ENCODE measurements at regions of chr20 and their contacts with region 1.

Region 1: DNA sequence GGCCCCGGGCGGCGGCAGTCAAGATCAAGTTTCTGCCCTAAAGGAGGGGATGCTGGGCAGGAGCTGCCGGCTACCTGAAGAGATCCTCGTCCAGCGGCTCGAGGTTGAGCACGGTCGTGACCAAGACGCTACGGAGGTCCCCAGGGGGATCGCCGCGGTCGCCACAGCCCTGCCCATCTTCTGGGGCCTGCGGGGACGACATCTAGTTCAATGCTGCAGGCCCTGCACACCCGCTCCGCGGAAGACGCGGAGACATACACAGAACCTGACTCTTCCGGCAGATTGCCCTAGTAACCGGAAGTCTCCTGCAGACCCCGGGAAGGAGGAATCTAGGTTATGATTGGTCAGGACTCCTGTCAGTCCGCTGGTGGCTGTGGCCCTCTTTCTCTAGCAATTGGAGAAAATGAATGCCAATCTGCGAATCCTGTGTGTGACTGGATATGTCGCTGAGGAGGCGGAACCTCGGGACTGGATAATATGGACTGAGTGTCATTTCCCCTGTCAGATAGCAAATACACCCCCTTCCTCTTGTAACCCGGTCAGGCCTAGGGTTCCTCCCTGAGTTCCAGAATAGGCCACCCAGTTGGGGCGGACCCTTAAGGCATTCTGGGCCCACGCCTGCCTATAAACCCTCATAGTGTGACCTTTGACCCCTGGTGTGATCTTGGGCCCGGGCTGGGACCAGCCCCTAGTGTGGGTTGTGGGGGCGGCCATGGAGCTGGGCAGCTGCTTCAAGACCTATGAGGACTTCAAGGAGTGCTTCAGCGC is at the starts of genes ACOT8 and ZSWIM3:
- DNase-seq: peak; percentile 79 to 100 (median 91)
- ATAC-seq: peak; percentile 96
- H3K4me3 ChIP-seq: peak within 1 kb of the TSS; percentile 82 to 87
- H3K4me3 Mint-ChIP-seq: peak within 1 kb of the TSS; percentile 96
- H3K27ac ChIP-seq: peak within 1 kb of the TSS; percentile 80 to 93
- H3K27ac Mint-ChIP-seq: peak within 1 kb of the TSS; percentile 99
- H3K4me1 ChIP-seq: peaks cover 29% of the 10 kb centered on the region
- H3K4me1 Mint-ChIP-seq: peaks cover 52% of the 10 kb centered on the region
- H3K27me3 ChIP-seq: no peaks in the 10 kb centered on the region
- H3K27me3 Mint-ChIP-seq: no peaks in the 10 kb centered on the region
- CTCF ChIP-seq: no peak
- total RNA-seq, gene ACOT8: 14.5 to 17.0 TPM
- total RNA-seq, gene ZSWIM3: 0.30 to 0.58 TPM

Region 2: DNA sequence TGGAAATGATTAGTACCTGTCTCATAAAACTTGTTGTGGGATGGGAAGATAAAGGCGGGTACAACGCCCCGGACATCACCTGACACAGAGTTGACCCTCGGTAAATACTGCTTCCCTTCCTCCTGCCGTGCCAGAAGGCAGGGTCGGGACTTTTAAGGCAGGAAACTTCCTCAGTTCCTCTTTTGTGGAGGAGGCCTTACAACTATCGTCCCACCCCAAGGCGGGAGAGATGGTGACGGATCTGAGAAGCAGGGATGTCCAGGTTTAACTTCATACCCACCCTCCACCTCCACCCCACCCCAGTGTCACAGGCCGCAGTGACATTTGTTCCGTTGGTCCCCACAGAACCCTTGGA is 65.0 kb before region 1 on chr20:
- CTCF ChIA-PET with region 1: no interaction called
- POLR2A ChIA-PET with region 1: no interaction called
- intact Hi-C with region 1: loop called (anchors 2 kb)
- DNase-seq: peak in 3 of 9 experiments; percentile 8 to 20 (median 12)
- ATAC-seq: peak; percentile 10
- H3K4me3 ChIP-seq: peak overlapping the region; percentile 82 to 100
- H3K4me3 Mint-ChIP-seq: peak overlapping the region; percentile 93
- H3K27ac ChIP-seq: peak overlapping the region; percentile 87 to 96
- H3K27ac Mint-ChIP-seq: peak overlapping the region; percentile 93
- H3K4me1 ChIP-seq: peaks cover 16% of the 10 kb centered on the region
- H3K4me1 Mint-ChIP-seq: peaks cover 19% of the 10 kb centered on the region
- H3K27me3 ChIP-seq: no peaks in the 10 kb centered on the region
- H3K27me3 Mint-ChIP-seq: no peaks in the 10 kb centered on the region
- CTCF ChIP-seq: no peak

Region 3: DNA sequence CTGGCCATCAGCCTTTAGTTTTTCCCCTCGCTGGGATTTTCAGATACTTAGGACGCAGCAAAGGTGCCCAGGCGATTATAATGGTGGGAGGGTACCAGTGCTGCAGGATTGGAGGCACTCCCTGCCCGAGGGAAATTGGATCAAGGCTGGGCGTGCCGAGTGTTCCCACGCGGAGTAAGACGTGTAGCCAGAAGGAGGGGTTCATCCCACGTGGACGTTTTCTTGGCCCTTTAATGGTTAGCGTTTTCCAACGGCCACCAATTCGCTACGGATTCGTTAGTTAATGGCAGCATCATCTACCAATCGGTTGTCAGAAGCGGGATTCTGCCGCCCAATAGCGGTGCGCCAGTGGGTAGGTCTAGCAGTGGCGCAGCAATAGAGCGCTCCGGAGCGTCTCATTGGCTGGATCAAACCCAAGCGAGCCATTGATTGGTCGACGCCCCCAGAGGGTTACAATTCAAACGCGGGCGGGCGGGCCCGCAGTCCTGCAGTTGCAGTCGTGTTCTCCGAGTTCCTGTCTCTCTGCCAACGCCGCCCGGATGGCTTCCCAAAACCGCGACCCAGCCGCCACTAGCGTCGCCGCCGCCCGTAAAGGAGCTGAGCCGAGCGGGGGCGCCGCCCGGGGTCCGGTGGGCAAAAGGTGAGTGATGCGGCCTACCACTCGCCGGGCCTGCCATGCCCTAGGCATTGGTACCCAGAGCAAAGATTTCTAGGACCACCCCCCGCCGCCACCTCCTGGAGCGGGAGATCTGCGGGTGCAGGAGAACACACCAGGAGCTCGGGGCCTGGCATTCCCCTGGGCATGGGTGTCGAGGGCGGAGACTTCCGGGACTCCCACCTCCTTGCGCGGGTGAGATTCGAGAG is 44.9 kb before region 1 on chr20 and contains the start of gene UBE2C:
- CTCF ChIA-PET with region 1: no interaction called
- POLR2A ChIA-PET with region 1: no interaction called
- intact Hi-C with region 1: loop called (anchors 1 kb)
- DNase-seq: peak; percentile 87 to 98 (median 92)
- ATAC-seq: peak; percentile 99
- H3K4me3 ChIP-seq: peak within 1 kb of the TSS; percentile 62 to 67
- H3K4me3 Mint-ChIP-seq: peak within 1 kb of the TSS; percentile 80
- H3K27ac ChIP-seq: peak within 1 kb of the TSS in 1 of 2 experiments; percentile 51
- H3K27ac Mint-ChIP-seq: peak within 1 kb of the TSS; percentile 77
- H3K4me1 ChIP-seq: peaks cover 10% of the 10 kb centered on the region
- H3K4me1 Mint-ChIP-seq: peaks cover 10% of the 10 kb centered on the region
- H3K27me3 ChIP-seq: no peaks in the 10 kb centered on the region
- H3K27me3 Mint-ChIP-seq: no peaks in the 10 kb centered on the region
- CTCF ChIP-seq: no peak
- total RNA-seq, gene UBE2C: 0.60 TPM in 1 of 2 experiments, not detected in the other

Region 4: GRCh38 chr20:45880988-45881788 is 23.9 kb after region 1 on chr20 and contains the start of gene ZSWIM1:
- CTCF ChIA-PET with region 1: interaction called, 5 read pairs
- POLR2A ChIA-PET with region 1: interaction called, 21 read pairs
- intact Hi-C with region 1: loop called (anchors 1 kb)
- DNase-seq: peak; percentile 96 to 100 (median 99)
- ATAC-seq: peak; percentile 97
- H3K4me3 ChIP-seq: peak within 1 kb of the TSS; percentile 71 to 82
- H3K4me3 Mint-ChIP-seq: peak within 1 kb of the TSS; percentile 91
- H3K27ac ChIP-seq: peak within 1 kb of the TSS; percentile 75 to 87
- H3K27ac Mint-ChIP-seq: peak within 1 kb of the TSS; percentile 96
- H3K4me1 ChIP-seq: peaks cover 18% of the 10 kb centered on the region
- H3K4me1 Mint-ChIP-seq: peaks cover 40% of the 10 kb centered on the region
- H3K27me3 ChIP-seq: no peaks in the 10 kb centered on the region
- H3K27me3 Mint-ChIP-seq: no peaks in the 10 kb centered on the region
- CTCF ChIP-seq: no peak
- total RNA-seq, gene ZSWIM1: 8.5 to 9.2 TPM

Region 5: DNA sequence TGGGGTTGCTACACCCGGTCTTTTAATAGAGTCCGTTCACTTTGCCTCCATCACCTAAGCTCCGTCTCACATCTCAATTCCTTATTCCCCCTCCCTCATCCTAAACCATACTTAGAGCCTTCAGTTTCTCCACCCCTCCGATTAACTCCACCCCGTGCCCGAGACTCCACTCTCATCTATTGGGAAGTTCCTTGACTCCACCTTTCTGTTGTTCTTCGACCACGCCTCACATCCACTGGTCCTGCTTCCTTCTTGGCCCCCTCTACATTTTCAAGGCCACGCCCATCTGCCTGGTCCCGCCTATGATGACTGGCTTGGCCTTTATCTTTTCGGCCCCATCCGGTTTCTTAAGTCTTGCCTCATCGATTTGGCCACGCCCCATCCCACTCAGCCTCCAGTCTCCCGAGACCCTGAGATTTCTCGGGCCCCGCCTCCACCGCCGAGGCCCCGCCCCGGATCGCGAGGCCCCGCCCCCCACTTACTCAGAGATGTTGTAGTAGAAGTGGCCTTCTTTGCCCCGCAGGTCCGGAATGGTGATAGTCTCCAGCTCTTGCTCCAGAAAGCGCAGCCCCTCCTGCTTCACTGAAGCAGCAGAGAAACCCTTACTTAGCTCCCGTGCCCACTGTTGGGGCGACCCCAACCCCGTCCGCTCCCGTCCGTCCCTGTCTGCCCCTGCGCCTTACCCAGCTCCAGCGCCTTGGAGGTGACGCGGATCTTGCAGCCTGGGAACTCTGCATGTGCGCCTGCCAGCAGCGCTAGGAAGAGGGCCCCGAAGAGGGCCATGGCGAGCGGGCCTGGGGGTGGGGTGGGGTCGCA is 53.6 kb after region 1 on chr20:
- CTCF ChIA-PET with region 1: no interaction called
- POLR2A ChIA-PET with region 1: no interaction called
- intact Hi-C with region 1: loop called in 1 of 2 experiments (anchors 1 kb)
- DNase-seq: peak; percentile 78 to 93 (median 88)
- ATAC-seq: peak; percentile 95
- H3K4me3 ChIP-seq: peak overlapping the region; percentile 53 to 75
- H3K4me3 Mint-ChIP-seq: peak overlapping the region; percentile 89
- H3K27ac ChIP-seq: no peak overlapping the region
- H3K27ac Mint-ChIP-seq: peak overlapping the region; percentile 14
- H3K4me1 ChIP-seq: peaks cover 17% of the 10 kb centered on the region
- H3K4me1 Mint-ChIP-seq: peaks cover 16% of the 10 kb centered on the region
- H3K27me3 ChIP-seq: peaks cover 0 to 5% of the 10 kb centered on the region in 2 experiments
- H3K27me3 Mint-ChIP-seq: peaks cover 15% of the 10 kb centered on the region
- CTCF ChIP-seq: no peak